Activated T-helper 2 cell treated with anti-CD3 and anti-CD28 coated beads, Interferon-gamma antibody, Interleukin-2, Interleukin-4, amounts not matched to agents 10 μg/mL and 5 μg/mL and 100 μg/mL, durations not matched to agents 14 hours and 24 hours and 36 hours (primary cell): ENCODE measurements at regions of chr3 and their contacts with region 1.

Region 1: DNA sequence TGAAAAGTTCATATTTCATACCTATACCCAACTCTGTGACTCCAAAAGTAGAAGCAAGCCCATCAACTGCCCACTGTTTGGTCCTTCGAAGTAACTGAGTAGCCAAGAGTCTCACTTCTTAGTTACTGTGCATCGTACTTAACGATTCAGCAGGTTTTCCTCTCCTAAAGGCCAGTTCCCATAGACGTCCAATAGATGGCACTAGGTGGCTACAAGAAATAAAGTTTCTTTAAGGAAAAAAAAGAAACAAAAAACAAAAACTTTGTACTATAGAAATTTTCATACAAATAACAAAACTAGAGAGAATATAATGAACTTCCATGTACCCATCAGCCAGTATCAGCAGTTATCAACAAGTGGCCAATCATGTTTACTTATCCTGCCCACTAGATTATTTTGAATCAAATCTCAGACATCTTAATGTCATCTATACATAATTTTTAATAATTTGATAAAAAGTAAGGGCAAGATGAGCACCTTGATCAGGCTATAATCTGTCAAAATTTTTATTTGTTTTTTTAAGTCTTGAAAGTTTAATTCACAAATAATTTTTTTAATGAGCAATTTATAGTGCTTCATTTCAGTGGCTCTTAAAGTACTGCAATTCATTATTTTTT is 63.8 kb upstream of the ACP3 start:
- DNase-seq: no peak
- H3K4me3 Mint-ChIP-seq: no peak overlapping the region
- H3K27ac Mint-ChIP-seq: no peak overlapping the region
- H3K4me1 Mint-ChIP-seq: no peaks in the 10 kb centered on the region
- H3K27me3 Mint-ChIP-seq: peaks cover 8% of the 10 kb centered on the region

Region 2: DNA sequence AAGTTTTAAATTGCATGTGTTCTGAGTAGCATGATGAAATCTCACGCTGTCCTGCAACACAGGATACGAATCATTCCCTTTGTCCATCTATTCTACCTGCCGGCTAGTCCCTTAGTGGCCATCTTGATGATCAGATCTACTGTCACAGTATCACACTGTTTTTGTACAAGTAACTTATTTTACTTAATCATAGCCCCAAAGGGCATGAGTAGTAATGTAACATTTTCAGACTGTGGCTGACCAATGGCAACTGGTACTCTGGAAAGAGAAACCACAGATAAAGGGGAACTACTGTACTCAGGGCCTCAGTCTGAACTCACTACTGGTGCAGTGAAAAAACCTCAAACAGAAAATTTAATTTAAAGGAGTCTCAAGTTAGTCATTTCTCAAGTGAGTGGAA is 623.3 kb before region 1 on chr3:
- intact Hi-C with region 1: no loop called
- DNase-seq: no peak
- H3K4me3 Mint-ChIP-seq: no peak overlapping the region
- H3K27ac Mint-ChIP-seq: no peak overlapping the region
- H3K4me1 Mint-ChIP-seq: no peaks in the 10 kb centered on the region
- H3K27me3 Mint-ChIP-seq: peaks cover 18% of the 10 kb centered on the region

Region 3: GRCh38 chr3:131705558-131706051 is 547.8 kb before region 1 on chr3:
- intact Hi-C with region 1: no loop called
- DNase-seq: no peak
- H3K4me3 Mint-ChIP-seq: no peak overlapping the region
- H3K27ac Mint-ChIP-seq: no peak overlapping the region
- H3K4me1 Mint-ChIP-seq: peaks cover 5% of the 10 kb centered on the region
- H3K27me3 Mint-ChIP-seq: peaks cover 26% of the 10 kb centered on the region

Region 4: GRCh38 chr3:132283440-132283839 is 30.1 kb after region 1 on chr3:
- intact Hi-C with region 1: no loop called
- DNase-seq: no peak
- H3K4me3 Mint-ChIP-seq: no peak overlapping the region
- H3K27ac Mint-ChIP-seq: no peak overlapping the region
- H3K4me1 Mint-ChIP-seq: no peaks in the 10 kb centered on the region
- H3K27me3 Mint-ChIP-seq: no peaks in the 10 kb centered on the region

Region 5: DNA sequence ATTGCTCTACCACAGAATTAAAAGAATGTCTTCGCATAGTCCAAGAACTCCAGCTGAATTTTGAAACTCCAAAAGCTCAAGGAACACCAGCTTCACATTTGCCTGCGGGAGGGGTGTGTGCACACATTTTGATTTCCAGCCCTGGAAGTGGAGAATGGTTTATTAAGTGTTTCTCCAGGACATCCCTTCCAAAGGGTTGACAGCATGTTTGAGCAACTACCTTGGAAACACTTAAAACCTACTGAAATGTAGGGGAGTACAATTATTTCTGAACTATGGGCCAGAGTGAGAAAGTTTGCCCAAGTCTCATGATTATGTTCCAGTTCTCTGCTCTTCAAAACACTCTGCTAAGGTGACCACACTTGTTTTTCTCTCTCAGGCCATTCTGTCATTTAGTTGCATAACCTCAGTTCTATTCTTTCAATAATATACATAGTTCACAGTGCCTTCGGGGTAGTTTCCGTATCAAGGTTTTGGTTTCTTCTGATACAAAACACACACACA is 71.8 kb after region 1 on chr3:
- intact Hi-C with region 1: no loop called
- DNase-seq: no peak
- H3K4me3 Mint-ChIP-seq: no peak overlapping the region
- H3K27ac Mint-ChIP-seq: no peak overlapping the region
- H3K4me1 Mint-ChIP-seq: no peaks in the 10 kb centered on the region
- H3K27me3 Mint-ChIP-seq: peaks cover 7% of the 10 kb centered on the region

Region 6: DNA sequence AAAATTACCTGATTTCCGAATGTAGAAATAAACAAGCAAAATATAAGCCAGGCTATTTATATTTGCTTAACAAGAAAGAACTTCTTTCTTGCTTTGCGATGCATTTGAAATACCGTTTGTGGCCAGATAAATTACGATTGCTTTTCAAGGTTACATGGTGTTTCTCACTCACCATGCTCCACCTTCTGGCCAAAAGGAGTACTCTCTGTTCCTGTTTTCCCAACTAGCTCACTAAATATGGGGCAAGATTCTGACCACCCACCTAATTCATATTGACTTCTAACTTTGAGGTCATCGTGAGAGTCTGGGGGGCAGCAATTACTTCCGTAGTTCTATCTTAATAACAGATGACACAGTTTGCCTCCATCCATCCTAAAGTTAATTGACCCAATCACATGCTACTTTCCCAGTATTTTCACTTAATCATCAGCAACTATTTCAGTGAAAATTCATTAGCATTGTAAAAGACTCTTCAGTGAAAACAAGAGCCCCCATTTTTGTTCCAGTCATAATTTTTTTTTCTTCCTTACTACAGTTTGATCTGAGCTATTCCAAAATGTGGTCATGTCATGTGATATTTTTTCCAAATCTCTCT is 89.7 kb after region 1 on chr3:
- intact Hi-C with region 1: loop called (anchors 1 kb)
- DNase-seq: no peak
- H3K4me3 Mint-ChIP-seq: no peak overlapping the region
- H3K27ac Mint-ChIP-seq: no peak overlapping the region
- H3K4me1 Mint-ChIP-seq: no peaks in the 10 kb centered on the region
- H3K27me3 Mint-ChIP-seq: peaks cover 24% of the 10 kb centered on the region

Region 7: GRCh38 chr3:132399054-132399929 is 145.9 kb after region 1 on chr3:
- intact Hi-C with region 1: loop called (anchors 1 kb)
- DNase-seq: no peak
- H3K4me3 Mint-ChIP-seq: no peak overlapping the region
- H3K27ac Mint-ChIP-seq: no peak overlapping the region
- H3K4me1 Mint-ChIP-seq: no peaks in the 10 kb centered on the region
- H3K27me3 Mint-ChIP-seq: peaks cover 32% of the 10 kb centered on the region

Region 8: DNA sequence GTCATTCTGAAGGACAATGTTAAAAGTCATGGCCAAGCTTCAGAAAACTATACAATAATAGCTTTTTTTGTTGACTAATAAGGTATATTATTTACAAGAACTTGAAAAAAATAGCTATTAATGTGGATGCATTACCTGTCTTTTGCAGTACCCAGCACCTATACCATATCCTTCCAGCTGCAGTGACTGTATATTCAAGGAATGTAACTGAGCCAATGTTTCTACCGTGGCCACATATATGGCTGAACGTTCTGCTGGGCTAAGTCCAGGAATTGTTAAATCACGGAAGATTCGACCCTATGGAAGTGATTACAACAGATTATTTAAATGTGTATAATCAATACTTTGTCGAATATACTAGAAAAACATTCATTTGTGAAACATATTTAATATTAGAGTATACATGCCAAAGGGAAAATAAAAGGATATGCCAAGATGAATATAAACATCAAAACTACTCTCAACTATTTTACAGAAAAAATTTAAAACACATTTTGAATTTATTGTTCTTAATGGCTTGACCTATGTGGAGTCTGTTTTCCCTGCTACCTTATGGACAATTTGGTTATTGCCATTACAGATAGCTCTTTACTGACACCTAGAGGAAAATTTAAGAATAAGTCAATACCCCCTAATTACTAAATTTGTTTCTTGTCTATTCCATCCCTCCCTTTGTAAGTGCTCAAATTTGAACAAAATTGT is 388.6 kb after region 1 on chr3:
- intact Hi-C with region 1: loop called (anchors 10 kb)
- DNase-seq: no peak
- H3K4me3 Mint-ChIP-seq: no peak overlapping the region
- H3K27ac Mint-ChIP-seq: no peak overlapping the region
- H3K4me1 Mint-ChIP-seq: peaks cover 5% of the 10 kb centered on the region
- H3K27me3 Mint-ChIP-seq: no peaks in the 10 kb centered on the region